ENCODE measurements at regions of chr14 and their contacts with region 1.

Region 1: GRCh38 chr14:70600382-70601157 is at the start of gene MED6:
- DNase-seq: peak; percentile 95
- ATAC-seq: peak; percentile 100
- H3K4me3 Mint-ChIP-seq: peak within 1 kb of the TSS; percentile 100
- H3K27ac Mint-ChIP-seq: peak within 1 kb of the TSS; percentile 96
- H3K4me1 Mint-ChIP-seq: peaks cover 23% of the 10 kb centered on the region
- H3K27me3 Mint-ChIP-seq: peaks cover 4% of the 10 kb centered on the region
- total RNA-seq, gene MED6: 51.2 to 56.1 TPM

Region 2: GRCh38 chr14:70640938-70641547 is 40.5 kb after region 1 on chr14:
- CTCF ChIA-PET with region 1: no interaction called
- POLR2A ChIA-PET with region 1: no interaction called
- intact Hi-C with region 1: loop called in 1 of 2 experiments (anchors 1 kb)
- DNase-seq: peak; percentile 79
- ATAC-seq: peak; percentile 80
- H3K4me3 Mint-ChIP-seq: peak overlapping the region; percentile 87
- H3K27ac Mint-ChIP-seq: peak overlapping the region; percentile 90
- H3K4me1 Mint-ChIP-seq: peaks cover 40% of the 10 kb centered on the region
- H3K27me3 Mint-ChIP-seq: no peaks in the 10 kb centered on the region

Region 3: DNA sequence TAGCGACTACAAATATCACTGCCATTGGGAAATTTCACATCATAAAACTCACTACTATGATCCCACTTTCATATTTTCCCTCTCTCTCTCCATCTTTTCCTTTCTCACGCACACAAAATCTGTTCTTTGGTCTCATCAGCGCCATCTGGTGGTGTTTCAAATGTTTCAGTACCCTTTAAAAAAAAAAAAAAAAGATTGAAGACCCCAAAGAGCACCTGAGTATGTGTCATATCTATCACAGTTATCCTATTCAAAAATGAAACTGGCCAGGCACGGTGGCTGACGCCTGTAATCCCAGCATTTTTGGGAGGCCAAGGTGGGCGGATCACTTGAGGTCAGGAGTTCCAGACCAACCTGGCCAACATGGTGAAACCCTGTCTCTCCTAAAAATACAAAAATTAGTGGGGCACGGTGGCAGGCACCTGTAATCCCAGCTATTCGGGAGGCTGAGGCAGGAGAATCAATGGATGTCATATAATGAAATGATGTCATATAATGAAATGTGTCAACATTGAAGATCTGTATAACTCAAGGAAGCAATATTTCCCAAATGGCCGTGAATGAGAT is 113.6 kb after region 1 on chr14:
- CTCF ChIA-PET with region 1: interaction called, 4 read pairs
- POLR2A ChIA-PET with region 1: no interaction called
- intact Hi-C with region 1: loop called in 1 of 2 experiments (anchors 1 kb)
- DNase-seq: peak; percentile 64
- ATAC-seq: no peak
- H3K4me3 Mint-ChIP-seq: no peak overlapping the region
- H3K27ac Mint-ChIP-seq: no peak overlapping the region
- H3K4me1 Mint-ChIP-seq: peaks cover 3% of the 10 kb centered on the region
- H3K27me3 Mint-ChIP-seq: no peaks in the 10 kb centered on the region

Region 4: GRCh38 chr14:70816525-70816924 is 216.0 kb after region 1 on chr14:
- CTCF ChIA-PET with region 1: interaction called, 7 read pairs
- POLR2A ChIA-PET with region 1: no interaction called
- intact Hi-C with region 1: loop called (anchors 1 to 5 kb)
- DNase-seq: no peak
- ATAC-seq: no peak
- H3K4me3 Mint-ChIP-seq: no peak overlapping the region
- H3K27ac Mint-ChIP-seq: no peak overlapping the region
- H3K4me1 Mint-ChIP-seq: peaks cover 10% of the 10 kb centered on the region
- H3K27me3 Mint-ChIP-seq: peaks cover 15% of the 10 kb centered on the region